Dorsolateral prefrontal cortex (tissue), 120 donors: ENCODE measurements at regions of chr1 and their contacts with region 1.

Region 1: GRCh38 chr1:10032590-10033358 is at the start of gene UBE4B:
- DNase-seq: peak; percentile 96 to 99 (median 97)
- H3K4me3 ChIP-seq: peak within 1 kb of the TSS; percentile 66 to 100 (median 97)
- H3K27ac ChIP-seq: peak within 1 kb of the TSS; percentile 78 to 99 (median 98)
- H3K27me3 ChIP-seq: no peaks in the 10 kb centered on the region
- CTCF ChIP-seq: peak; percentile 64 to 97 (median 86)
- total RNA-seq, gene UBE4B: 59.0 to 105 (median 78.4) TPM

Region 2: DNA sequence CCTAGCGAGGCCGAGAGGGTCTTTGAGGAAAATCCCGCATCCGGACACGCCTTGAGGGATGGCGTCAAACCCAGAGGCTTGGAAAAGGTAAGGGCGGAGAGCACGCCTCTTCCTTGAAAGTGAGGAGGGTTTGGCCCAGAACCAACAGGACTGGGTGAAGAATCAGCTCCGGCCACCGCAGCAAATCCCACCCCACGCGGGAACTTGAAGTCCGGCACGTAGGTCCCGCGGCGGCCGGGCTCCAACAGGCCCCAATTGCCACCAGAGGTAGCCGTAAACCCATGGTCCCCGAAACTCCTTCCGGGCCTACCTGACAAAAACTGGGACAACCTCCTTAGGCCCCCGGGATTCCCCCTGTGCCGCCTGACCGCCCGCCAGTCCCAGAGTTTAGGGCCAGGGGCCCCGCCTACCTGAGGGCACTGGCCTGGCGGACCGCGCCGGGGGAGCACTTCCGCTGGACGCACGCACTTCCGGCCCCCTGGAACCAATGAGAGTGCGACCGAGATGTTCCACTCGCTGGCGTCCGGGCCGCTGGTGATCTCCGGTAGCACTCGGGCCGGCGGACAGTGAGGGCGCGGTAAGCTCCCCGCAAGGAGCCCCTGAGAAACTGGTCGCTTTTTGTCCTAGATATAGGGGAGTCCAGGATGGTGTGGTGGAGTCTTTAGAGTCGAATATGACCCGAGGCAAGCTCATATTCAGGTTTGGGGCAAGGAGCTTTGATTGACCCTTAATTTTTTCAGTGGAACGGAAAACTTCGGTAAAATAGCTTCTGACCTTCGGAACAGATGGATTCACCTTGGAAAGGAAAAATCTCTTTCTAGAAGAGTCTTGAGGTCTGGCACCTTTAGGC is 89.6 kb before region 1 on chr1 and contains the starts of genes LZIC and NMNAT1:
- intact Hi-C with region 1: loop called (anchors 2 to 5 kb)
- DNase-seq: peak; percentile 90 to 95 (median 94)
- H3K4me3 ChIP-seq: peak within 1 kb of the TSS; percentile 70 to 99 (median 92)
- H3K27ac ChIP-seq: peak within 1 kb of the TSS; percentile 52 to 96 (median 85)
- H3K27me3 ChIP-seq: no peaks in the 10 kb centered on the region
- CTCF ChIP-seq: peak in 48 of 56 donors; percentile 2 to 68 (median 40)
- total RNA-seq, gene LZIC: 21.5 to 45.4 (median 31.9) TPM
- total RNA-seq, gene NMNAT1: 6.4 to 18.0 (median 10.1) TPM

Region 3: GRCh38 chr1:10050611-10051010 is 17.8 kb after region 1 on chr1:
- intact Hi-C with region 1: loop called in 1 of 2 experiments (anchors 2 kb)
- DNase-seq: peak in 2 of 10 donors; percentile 18 to 27
- H3K4me3 ChIP-seq: no peak overlapping the region
- H3K27ac ChIP-seq: peak overlapping the region in 36 of 59 donors; percentile 4 to 89 (median 56)
- H3K27me3 ChIP-seq: no peaks in the 10 kb centered on the region
- CTCF ChIP-seq: no peak

Region 4: GRCh38 chr1:10108134-10108663 is 75.4 kb after region 1 on chr1:
- intact Hi-C with region 1: loop called in 1 of 2 experiments (anchors 5 kb)
- DNase-seq: no peak
- H3K4me3 ChIP-seq: peak overlapping the region in 22 of 59 donors; percentile 0 to 33 (median 14)
- H3K27ac ChIP-seq: peak overlapping the region; percentile 63 to 97 (median 88)
- H3K27me3 ChIP-seq: no peaks in the 10 kb centered on the region
- CTCF ChIP-seq: no peak

Region 5: GRCh38 chr1:10152709-10153284 is 120.0 kb after region 1 on chr1:
- intact Hi-C with region 1: loop called (anchors 5 to 10 kb)
- DNase-seq: peak; percentile 58 to 89 (median 72)
- H3K4me3 ChIP-seq: no peak overlapping the region
- H3K27ac ChIP-seq: peak overlapping the region; percentile 34 to 92 (median 80)
- H3K27me3 ChIP-seq: no peaks in the 10 kb centered on the region
- CTCF ChIP-seq: peak in 55 of 56 donors; percentile 38 to 87 (median 72)